Activated CD4-positive, alpha-beta memory T cell treated with anti-CD3 and anti-CD28 coated beads, Interleukin-2, amount 10 ng/mL, durations not matched to agents 7 days and 5 days (primary cell): ENCODE measurements at regions of chr17 and their contacts with region 1.

Region 1: GRCh38 chr17:68019675-68020408 is 15.7 kb upstream of the KPNA2 start:
- DNase-seq: peak; percentile 98
- H3K4me3 Mint-ChIP-seq: peak overlapping the region; percentile 73
- H3K27ac Mint-ChIP-seq: peak overlapping the region; percentile 81
- H3K4me1 Mint-ChIP-seq: peaks cover 13% of the 10 kb centered on the region
- H3K27me3 Mint-ChIP-seq: peaks cover 5% of the 10 kb centered on the region

Region 2: DNA sequence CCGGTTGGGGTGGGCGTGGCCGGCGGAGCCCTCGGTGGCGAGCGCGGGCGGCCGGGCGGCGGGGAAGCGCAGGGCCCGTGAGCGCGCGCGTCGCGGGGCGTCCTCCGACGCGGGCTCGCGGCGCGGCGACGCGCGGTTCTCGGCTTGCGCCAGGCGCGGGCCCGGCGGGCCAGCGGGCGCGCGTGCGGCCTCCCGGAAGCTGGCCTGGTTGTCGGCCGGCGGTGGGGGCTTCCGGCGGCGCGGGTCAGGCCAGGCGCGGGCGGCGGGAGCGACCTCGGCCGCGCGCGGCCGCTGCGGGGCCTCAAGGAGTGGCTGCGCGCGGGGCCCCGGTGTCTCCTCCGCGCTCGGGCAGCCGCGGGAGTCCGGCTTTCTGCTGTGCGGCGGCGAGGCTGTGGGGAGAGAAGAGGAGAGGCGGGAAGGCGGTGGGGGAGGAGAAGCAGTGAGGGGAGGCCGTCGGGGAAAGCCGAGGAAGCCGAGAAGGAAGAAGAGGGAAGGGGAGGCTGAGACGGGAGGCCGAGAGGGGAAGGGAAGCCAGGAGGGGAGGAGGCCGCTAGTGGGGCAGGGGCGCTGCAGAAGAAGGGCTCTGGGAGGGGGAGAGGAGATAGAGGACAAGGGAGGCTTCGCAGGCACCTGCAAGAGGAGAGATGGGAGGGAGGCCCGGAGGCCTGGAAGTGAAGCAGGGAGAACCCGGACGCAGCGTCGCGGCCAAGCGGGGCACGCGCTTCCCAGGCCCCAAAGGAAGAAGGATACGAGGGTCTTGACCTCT is 26.1 kb before region 1 on chr17:
- CTCF ChIA-PET with region 1: interaction called, 8 read pairs
- POLR2A ChIA-PET with region 1: interaction called, 19 read pairs
- DNase-seq: no peak
- H3K4me3 Mint-ChIP-seq: peak overlapping the region; percentile 76
- H3K27ac Mint-ChIP-seq: peak overlapping the region; percentile 82
- H3K4me1 Mint-ChIP-seq: peaks cover 37% of the 10 kb centered on the region
- H3K27me3 Mint-ChIP-seq: peaks cover 10% of the 10 kb centered on the region

Region 3: DNA sequence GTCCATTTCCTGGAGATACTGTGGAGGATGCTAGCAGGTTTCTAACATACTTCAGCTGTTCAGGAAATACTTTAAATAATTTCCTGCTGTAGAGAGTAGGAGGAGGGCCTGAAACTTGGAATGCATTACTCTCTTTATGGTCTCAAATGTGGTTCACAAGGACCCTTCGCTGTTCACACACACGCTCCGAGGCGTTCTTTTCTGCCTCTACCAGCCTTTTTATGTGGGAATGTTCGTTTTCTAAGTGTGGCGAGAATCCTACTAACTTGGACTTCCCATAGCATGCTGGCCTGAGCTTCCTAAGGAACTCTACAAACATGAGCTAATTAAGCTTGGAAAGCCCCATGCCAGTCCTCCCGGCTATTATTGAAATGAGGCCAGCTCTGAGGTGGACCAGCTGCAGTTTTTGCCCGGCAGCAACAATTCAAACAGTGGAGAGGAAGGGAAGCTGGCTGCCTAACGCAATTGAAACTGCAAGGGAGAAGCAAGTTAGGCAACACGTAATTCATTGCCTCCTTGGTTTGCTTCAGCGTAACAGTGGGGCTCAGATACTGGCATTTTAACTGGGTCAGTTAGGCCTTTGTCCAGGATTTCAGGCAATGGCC is 34.6 kb after region 1 on chr17:
- CTCF ChIA-PET with region 1: no interaction called
- POLR2A ChIA-PET with region 1: no interaction called
- DNase-seq: no peak
- H3K4me3 Mint-ChIP-seq: no peak overlapping the region
- H3K27ac Mint-ChIP-seq: no peak overlapping the region
- H3K4me1 Mint-ChIP-seq: peaks cover 1% of the 10 kb centered on the region
- H3K27me3 Mint-ChIP-seq: peaks cover 2% of the 10 kb centered on the region

Region 4: DNA sequence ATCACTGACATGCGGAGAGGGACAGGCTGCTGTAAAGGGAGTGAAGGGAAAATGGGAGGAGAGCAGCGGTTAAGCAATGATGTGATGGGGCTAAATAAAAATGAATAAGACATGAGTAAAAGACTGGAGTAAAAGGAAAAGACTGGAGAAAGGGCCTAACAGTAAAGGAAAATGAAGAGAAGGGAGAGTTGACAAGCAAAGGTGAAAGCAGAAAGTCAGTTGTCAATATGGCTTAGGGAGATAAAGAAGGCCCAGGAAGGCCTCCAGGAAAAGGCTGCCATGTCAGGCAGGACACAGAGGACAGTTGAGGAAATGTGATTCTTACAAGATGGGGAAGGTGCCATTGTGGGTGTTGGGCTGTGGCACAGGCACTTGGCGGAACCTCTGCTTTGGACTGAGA is 129.1 kb after region 1 on chr17:
- CTCF ChIA-PET with region 1: no interaction called
- POLR2A ChIA-PET with region 1: no interaction called
- DNase-seq: no peak
- H3K4me3 Mint-ChIP-seq: no peak overlapping the region
- H3K27ac Mint-ChIP-seq: no peak overlapping the region
- H3K4me1 Mint-ChIP-seq: no peaks in the 10 kb centered on the region
- H3K27me3 Mint-ChIP-seq: peaks cover 5% of the 10 kb centered on the region